ENCODE measurements at regions of chr7 and their contacts with region 1.

Region 1: DNA sequence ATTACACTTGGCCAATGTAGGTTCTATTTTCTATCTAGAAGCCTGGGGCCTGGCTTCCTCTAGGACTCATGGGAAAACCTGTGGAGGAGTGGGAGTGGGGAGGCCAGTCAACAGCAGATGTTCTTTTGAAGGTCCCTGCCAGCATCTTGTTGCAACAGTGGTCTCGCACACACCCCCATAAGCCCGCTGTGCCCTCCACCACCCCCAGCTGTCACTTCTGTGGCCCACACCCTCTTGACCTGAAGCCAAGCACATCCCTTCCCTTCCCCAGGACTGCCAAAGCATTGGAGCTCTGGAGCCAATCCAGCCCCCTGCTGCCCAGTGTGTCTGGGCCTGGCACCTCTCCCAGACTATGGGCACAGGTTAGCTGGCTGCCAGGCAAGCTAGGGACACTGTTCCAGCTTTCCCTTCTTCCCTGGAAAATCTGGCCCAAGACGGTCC is 1.9 kb upstream of the STX1A start:
- DNase-seq: no peak
- H3K4me3 ChIP-seq: no peak overlapping the region
- H3K27ac ChIP-seq: no peak overlapping the region
- H3K4me1 ChIP-seq: peaks cover 26 to 52% (median 33%) of the 10 kb centered on the region in 3 donors
- H3K27me3 ChIP-seq: peaks cover 0 to 12% (median 0%) of the 10 kb centered on the region in 4 donors
- CTCF ChIP-seq: no peak
- POLR2A ChIP-seq: no peak

Region 2: DNA sequence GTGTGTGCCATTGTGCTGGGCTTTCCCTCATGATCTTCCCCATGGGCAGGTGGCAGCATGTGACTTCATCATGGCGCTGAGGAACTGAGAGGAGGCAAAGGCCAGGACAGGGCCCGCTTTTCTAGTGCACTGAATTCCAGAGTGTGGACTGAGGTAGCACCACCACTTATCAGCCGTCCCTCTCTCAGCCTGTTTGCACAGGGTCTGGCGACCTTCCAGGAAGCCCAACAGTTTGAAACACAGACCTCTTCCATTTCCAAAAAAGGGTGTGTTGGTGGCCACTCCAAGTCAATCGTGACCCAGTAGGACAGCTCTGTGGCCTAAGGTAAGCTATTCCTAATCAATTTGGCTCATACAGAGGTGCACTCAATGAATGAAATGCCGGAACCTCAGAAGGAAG is 42.5 kb before region 1 on chr7:
- intact Hi-C with region 1: loop called (anchors 10 kb)
- DNase-seq: no peak
- H3K4me3 ChIP-seq: no peak overlapping the region
- H3K27ac ChIP-seq: no peak overlapping the region
- H3K4me1 ChIP-seq: peaks cover 20 to 38% (median 22%) of the 10 kb centered on the region in 3 donors
- H3K27me3 ChIP-seq: no peaks in the 10 kb centered on the region
- CTCF ChIP-seq: no peak
- POLR2A ChIP-seq: no peak